ENCODE measurements at regions of chr14 and their contacts with region 1.

Region 1: DNA sequence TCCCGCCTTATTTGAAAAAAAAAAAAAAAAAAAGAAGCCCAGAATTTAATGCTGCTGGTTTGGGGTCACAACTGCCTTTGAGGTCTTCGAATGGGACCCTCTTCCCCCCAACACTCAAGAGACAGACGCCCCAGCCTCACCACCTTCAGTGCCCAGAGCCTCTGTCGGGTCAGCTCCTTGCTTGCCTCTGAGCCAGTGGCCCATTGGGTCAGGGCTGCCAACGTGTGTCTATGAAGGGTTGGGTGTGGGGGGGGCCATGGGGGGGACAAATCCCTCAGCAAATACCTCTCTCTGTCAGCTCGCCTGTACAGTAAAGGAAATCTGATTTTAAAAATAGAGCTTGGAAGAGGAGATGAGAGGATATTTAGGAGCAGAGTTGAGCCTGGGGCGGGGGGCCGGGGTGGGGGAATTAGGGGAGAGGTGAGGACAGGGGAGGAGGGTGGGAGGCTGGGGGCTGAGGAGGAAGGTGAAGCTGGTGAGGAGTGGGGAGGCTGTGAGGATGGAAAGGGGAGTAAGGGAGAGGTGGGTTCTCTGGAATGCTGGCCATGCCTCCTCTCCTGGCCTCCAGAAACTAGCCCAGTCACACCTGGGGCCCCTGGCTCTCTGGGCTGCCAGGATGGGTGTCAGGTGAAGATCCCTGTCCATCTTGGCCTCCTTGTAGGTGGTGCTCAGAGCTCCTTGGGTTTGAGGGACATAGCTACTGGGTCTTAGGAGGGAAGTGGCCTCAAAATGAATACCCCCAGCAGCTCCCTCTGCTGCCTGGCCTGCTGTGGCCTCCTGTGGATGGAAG is 13.3 kb downstream of the RTL1 start:
- DNase-seq: no peak
- ATAC-seq: no peak
- H3K4me3 ChIP-seq: no peak overlapping the region
- H3K27ac ChIP-seq: no peak overlapping the region
- H3K4me1 ChIP-seq: no peaks in the 10 kb centered on the region; the same call in 1 of the 2 replicates
- H3K27me3 ChIP-seq: no peaks in the 10 kb centered on the region
- CTCF ChIP-seq: no peak

Region 2: GRCh38 chr14:100645192-100645990 is 244.9 kb before region 1 on chr14:
- CTCF ChIA-PET with region 1: interaction called, 11 read pairs
- POLR2A ChIA-PET with region 1: no interaction called
- in situ Hi-C with region 1: no loop called
- intact Hi-C with region 1: no loop called
- DNase-seq: no peak
- ATAC-seq: peak; percentile 86
- H3K4me3 ChIP-seq: no peak overlapping the region
- H3K27ac ChIP-seq: peak overlapping the region; percentile 71
- H3K4me1 ChIP-seq: peaks cover 15% of the 10 kb centered on the region
- H3K27me3 ChIP-seq: no peaks in the 10 kb centered on the region
- CTCF ChIP-seq: peak; percentile 81

Region 3: GRCh38 chr14:100906420-100906819 is 16.2 kb after region 1 on chr14:
- CTCF ChIA-PET with region 1: no interaction called
- POLR2A ChIA-PET with region 1: no interaction called
- in situ Hi-C with region 1: no loop called
- intact Hi-C with region 1: no loop called
- DNase-seq: no peak
- ATAC-seq: no peak
- H3K4me3 ChIP-seq: no peak overlapping the region
- H3K27ac ChIP-seq: no peak overlapping the region
- H3K4me1 ChIP-seq: no peaks in the 10 kb centered on the region
- H3K27me3 ChIP-seq: no peaks in the 10 kb centered on the region
- CTCF ChIP-seq: peak; percentile 49